ENCODE measurements at regions of chr12 and their contacts with region 1.

Region 1: GRCh38 chr12:69254046-69254445 is 14.7 kb downstream of the CPSF6 start:
- DNase-seq: peak; percentile 42
- H3K4me3 ChIP-seq: no peak overlapping the region
- H3K27ac ChIP-seq: no peak overlapping the region
- H3K4me1 ChIP-seq: no peaks in the 10 kb centered on the region; a peak in 3 of 4 replicates
- H3K27me3 ChIP-seq: no peaks in the 10 kb centered on the region
- CTCF ChIP-seq: peak; percentile 79
- EP300 ChIP-seq: no peak
- RAD21 ChIP-seq: peak; percentile 67

Region 2: GRCh38 chr12:69168828-69169227 is 85.2 kb before region 1 on chr12:
- CTCF ChIA-PET with region 1: no interaction called
- POLR2A ChIA-PET with region 1: no interaction called
- DNase-seq: no peak
- H3K4me3 ChIP-seq: no peak overlapping the region
- H3K27ac ChIP-seq: no peak overlapping the region
- H3K4me1 ChIP-seq: peaks cover 0 to 3% of the 10 kb centered on the region in 2 experiments; a peak in 1 of 4 replicates
- H3K27me3 ChIP-seq: no peaks in the 10 kb centered on the region
- CTCF ChIP-seq: no peak
- EP300 ChIP-seq: no peak
- RAD21 ChIP-seq: no peak

Region 3: GRCh38 chr12:69243099-69244084 is 10.7 kb before region 1 on chr12:
- CTCF ChIA-PET with region 1: interaction called, 19 read pairs
- POLR2A ChIA-PET with region 1: no interaction called
- DNase-seq: no peak
- H3K4me3 ChIP-seq: no peak overlapping the region
- H3K27ac ChIP-seq: no peak overlapping the region
- H3K4me1 ChIP-seq: peaks cover 6 to 23% of the 10 kb centered on the region in 2 experiments; a peak in 3 of 4 replicates
- H3K27me3 ChIP-seq: no peaks in the 10 kb centered on the region
- CTCF ChIP-seq: no peak
- EP300 ChIP-seq: no peak
- RAD21 ChIP-seq: no peak

Region 4: DNA sequence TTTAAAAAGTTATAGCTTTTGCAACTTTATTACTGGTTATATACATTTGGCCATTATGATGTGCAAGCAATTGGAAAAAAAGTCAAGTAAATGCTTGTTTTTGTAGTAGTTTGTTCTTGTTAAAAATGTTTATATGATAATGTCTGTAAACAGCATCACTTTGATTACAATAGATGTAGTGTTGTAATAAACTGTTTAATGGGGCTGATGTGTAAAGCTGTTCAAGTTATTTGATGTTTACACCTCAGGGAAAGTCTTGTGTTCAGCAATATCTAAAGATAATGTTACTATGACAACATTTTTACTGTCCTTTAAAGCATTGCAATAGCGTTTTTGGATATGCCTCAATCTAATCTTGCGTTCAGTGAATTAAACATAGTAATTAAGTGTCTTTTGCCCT is 15.7 kb after region 1 on chr12:
- CTCF ChIA-PET with region 1: interaction called, 15 read pairs
- POLR2A ChIA-PET with region 1: no interaction called
- DNase-seq: no peak
- H3K4me3 ChIP-seq: no peak overlapping the region
- H3K27ac ChIP-seq: no peak overlapping the region
- H3K4me1 ChIP-seq: peaks cover 0 to 11% of the 10 kb centered on the region in 2 experiments; a peak in 3 of 4 replicates
- H3K27me3 ChIP-seq: no peaks in the 10 kb centered on the region
- CTCF ChIP-seq: no peak
- EP300 ChIP-seq: no peak
- RAD21 ChIP-seq: no peak

Region 5: GRCh38 chr12:69708649-69709048 is 454.6 kb after region 1 on chr12:
- CTCF ChIA-PET with region 1: no interaction called
- POLR2A ChIA-PET with region 1: no interaction called
- DNase-seq: no peak
- H3K4me3 ChIP-seq: no peak overlapping the region
- H3K27ac ChIP-seq: no peak overlapping the region
- H3K4me1 ChIP-seq: no peaks in the 10 kb centered on the region
- H3K27me3 ChIP-seq: no peaks in the 10 kb centered on the region
- CTCF ChIP-seq: peak; percentile 34; the same call in 1 of the 2 replicates
- EP300 ChIP-seq: no peak
- RAD21 ChIP-seq: no peak

Measured in SK-N-SH (cell line).